Adrenal gland (tissue), 19 donors: ENCODE measurements at regions of chr12 and their contacts with region 1.

Region 1: DNA sequence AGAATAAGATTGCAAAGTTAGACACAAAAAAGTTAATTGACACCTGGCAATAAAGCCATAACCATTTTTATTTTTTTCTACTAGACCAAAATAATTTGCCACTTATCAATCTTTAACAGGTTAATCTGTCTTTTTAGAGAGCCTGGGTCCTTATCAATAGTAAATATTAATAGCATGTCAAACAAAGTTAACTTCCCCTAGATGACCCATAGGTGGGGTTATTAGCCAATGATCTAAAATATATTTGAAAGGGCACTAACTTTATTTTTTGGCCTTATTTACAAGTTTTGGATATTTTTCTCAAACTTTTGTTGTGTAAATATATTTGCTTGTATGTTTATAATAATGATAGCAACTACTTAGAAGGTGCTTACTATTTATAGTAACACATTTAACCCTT is 3.9 kb downstream of the ANKRD33 start:
- DNase-seq: no peak
- H3K4me3 ChIP-seq: no peak overlapping the region
- H3K27ac ChIP-seq: no peak overlapping the region
- H3K4me1 ChIP-seq: peaks cover 0 to 1% of the 10 kb centered on the region in 2 donors
- H3K27me3 ChIP-seq: no peaks in the 10 kb centered on the region
- CTCF ChIP-seq: peak in 3 of 6 experiments; percentile 22 to 44 (median 35)
- POLR2A ChIP-seq: no peak

Region 2: DNA sequence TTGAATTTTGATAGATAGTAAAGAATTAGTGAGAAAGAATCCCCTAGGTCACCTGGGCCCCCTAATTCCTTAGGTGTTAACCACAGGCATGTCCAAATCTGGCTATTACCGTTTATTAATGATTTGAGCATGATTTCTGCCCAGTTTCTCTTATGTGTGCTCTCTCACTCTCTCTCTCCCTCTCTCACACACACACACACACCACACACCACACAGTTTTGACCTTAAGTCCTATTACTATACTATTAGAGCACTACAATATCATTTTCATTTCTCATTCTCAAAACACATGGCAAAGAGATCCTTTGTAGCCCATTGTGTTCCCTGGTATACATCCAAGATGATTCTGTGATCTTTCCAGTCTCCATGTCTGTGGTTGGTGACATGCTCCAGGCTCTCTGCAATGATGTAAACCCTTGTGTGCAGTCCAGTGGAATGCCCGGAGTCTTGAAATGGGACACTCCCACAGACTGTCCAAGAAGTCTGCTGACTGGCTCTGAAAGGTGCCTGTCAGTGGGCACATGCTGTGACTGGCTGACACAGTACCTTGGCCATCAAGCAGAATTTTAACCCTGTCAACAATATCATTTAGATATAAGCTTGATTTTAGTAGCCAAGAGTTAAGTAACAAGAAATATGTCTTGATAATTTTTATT is 139.5 kb before region 1 on chr12:
- intact Hi-C with region 1: no loop called
- DNase-seq: peak in 5 of 7 donors; percentile 18 to 74 (median 40)
- H3K4me3 ChIP-seq: no peak overlapping the region
- H3K27ac ChIP-seq: peak overlapping the region in 1 of 5 donors; percentile 11
- H3K4me1 ChIP-seq: no peaks in the 10 kb centered on the region
- H3K27me3 ChIP-seq: no peaks in the 10 kb centered on the region
- CTCF ChIP-seq: no peak
- POLR2A ChIP-seq: no peak

Region 3: GRCh38 chr12:51980051-51980808 is 88.4 kb after region 1 on chr12:
- intact Hi-C with region 1: loop called (anchors 2 to 10 kb)
- DNase-seq: peak; percentile 48 to 89 (median 72)
- H3K4me3 ChIP-seq: no peak overlapping the region
- H3K27ac ChIP-seq: no peak overlapping the region
- H3K4me1 ChIP-seq: peaks cover 4 to 5% of the 10 kb centered on the region in 2 donors
- H3K27me3 ChIP-seq: no peaks in the 10 kb centered on the region
- CTCF ChIP-seq: peak; percentile 89 to 98 (median 92)
- POLR2A ChIP-seq: no peak